Right ventricle myocardium inferior (tissue), 1 donor: ENCODE measurements at regions of chr13 and their contacts with region 1.

Region 1: DNA sequence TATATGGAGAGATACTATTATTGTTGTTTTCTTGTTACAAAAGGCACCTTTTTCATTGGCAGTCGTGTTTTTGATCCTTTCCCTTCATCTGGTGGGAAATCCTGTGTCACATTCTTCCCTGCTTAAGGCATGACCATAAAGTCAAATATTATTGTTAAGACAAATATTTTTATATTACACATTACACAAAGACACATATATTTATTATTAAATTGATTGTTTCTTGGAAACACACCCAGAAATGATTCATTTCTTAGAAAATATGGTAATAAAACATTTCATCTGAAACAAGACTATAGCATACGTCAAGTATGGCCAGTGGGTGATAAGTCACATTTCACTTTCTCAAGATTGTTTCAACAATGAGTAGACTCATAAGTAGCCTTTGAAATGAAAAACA is 77.3 kb downstream of the KCTD12 start:
- DNase-seq: no peak
- ATAC-seq: no peak

Region 2: DNA sequence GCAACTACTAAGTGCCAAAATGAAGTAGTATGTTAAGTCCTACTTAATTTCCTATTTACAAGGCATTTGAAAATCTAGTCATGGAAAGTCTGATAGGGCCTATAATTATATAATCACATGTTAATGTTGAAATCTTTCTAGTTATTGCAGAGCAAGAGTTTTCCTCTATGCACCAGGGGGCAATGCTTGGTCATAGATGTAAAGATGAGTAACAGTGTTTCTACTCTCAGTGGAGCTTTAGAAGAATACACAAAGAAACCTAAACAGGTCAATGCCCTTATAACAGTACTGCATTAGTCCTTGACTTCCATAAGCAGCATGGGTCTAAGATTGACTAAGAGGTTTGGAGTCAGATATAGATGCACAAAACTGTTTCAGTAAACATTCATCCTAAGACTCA is 141.4 kb before region 1 on chr13:
- intact Hi-C with region 1: loop called (anchors 5 kb)
- DNase-seq: no peak
- ATAC-seq: peak; percentile 51

Region 3: GRCh38 chr13:76764429-76764828 is 44.5 kb before region 1 on chr13:
- intact Hi-C with region 1: loop called (anchors 5 kb)
- DNase-seq: peak; percentile 72
- ATAC-seq: peak; percentile 92